GM18951 (cell line): ENCODE measurements at regions of chr13 and their contacts with region 1.

Region 1: GRCh38 chr13:84896128-84896527 is 903.1 kb downstream of the SLITRK6 start:
- POLR2A ChIP-seq: no peak

Region 2: DNA sequence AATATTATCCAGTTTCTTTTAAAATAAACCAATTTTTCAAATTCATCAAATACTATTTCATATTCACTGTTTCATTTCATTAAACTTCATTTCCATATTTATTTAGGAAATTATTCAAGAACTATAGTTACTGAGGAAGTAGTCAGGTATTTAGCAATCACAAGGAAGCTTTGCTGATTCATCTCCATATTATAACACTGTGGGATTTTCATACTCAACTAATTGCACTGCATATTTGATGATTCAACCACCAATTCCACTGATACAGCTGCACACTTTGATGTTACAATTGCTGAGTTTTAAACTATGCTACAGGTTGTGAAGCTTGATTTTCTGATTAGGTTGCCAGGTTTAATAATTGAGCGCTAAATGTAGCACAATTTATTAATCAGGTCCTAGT is 457.0 kb before region 1 on chr13:
- in situ Hi-C with region 1: no loop called
- POLR2A ChIP-seq: no peak

Region 3: DNA sequence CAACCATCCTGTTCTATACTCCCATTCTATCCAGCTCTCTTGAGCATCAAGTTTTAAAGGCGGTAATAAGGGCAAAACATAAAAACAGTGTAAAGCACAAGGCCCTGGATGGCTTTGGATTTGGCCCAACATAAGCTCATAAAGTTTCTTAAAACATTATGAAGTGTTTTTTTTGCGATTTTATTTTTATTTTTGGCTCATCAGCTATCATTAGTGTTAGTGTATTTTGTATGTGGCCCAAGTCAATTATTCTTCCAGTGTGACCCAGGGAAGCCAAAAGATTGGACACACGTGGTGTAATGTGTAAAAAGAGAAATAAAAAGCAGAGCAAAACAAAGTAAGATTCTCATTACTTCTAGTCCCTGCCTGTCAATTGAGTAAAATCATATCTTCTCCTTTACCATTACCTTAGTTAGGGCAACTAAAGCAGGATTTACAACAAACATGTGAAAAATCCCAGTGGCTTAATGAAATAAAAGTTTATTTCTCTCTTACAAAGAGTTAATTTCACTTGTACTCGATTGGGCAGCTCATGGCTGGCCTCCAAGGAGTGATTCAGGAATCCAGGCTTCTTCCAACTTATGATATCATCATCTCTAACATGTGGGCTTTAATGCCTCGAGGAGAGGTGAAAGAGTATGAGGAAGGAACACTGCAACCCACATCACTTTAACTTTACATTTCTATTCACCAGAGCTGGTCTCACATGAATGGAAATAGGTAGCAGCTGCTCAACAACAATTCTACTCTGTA is 288.7 kb before region 1 on chr13:
- in situ Hi-C with region 1: no loop called
- POLR2A ChIP-seq: no peak

Region 4: DNA sequence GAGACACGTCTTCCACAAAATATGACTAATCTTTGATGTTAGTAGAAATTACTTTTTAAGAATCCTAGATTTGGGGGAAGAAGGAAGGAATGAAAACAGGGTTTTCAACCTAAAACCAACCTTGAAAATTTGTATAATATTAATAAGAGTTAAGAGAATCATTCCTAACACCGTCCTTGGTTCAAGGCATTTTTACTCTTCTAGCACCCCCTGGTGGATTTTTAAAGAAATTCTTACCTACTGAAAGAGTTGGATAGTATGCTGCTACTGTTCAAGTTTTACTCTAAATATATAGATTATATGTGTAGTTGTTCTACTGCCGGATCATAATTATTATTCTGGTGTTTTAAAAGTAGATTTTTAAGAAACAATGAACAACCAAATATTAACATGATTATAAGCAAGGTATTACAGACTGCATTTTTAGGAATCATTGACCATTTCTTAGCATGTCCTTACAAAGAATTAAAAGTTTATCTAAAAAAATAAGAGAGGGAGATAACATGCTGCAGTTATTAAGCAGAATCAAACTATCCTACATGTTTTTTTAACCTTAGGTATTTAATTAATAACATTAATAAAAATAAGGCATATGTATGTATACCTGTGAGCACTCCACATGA is 910.5 kb after region 1 on chr13:
- in situ Hi-C with region 1: loop called (anchors 10 kb)
- POLR2A ChIP-seq: no peak

Region 5: GRCh38 chr13:85935868-85936467 is 1039.8 kb after region 1 on chr13:
- in situ Hi-C with region 1: no loop called
- POLR2A ChIP-seq: no peak

Region 6: DNA sequence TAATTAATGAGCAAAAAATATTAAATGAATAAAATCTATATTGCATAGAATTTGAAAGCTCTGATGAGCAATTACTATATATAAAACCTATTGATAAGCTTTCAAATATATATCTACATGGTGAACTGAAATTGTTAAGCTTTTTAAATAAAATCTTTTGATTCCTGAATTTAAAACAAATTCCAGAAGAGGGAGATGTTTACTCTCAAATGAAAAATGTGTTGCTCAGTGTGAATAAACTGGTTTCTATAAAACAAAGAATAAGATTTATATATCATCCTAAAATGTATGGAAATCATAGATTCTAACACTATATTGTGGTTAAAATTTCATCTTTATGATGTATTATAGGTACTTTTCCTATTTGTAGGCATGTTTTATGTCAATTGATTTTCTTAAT is 1074.6 kb after region 1 on chr13:
- in situ Hi-C with region 1: no loop called
- POLR2A ChIP-seq: no peak